ENCODE measurements at regions of chr14 and their contacts with region 1.

Region 1: GRCh38 chr14:29016050-29016900 is 249.7 kb downstream of the FOXG1 start:
- ATAC-seq: peak in 3 of 8 experiments; percentile 45 to 73 (median 58)
- H3K4me3 ChIP-seq: no peak overlapping the region
- H3K27ac ChIP-seq: no peak overlapping the region
- H3K4me1 ChIP-seq: no peaks in the 10 kb centered on the region

Region 2: DNA sequence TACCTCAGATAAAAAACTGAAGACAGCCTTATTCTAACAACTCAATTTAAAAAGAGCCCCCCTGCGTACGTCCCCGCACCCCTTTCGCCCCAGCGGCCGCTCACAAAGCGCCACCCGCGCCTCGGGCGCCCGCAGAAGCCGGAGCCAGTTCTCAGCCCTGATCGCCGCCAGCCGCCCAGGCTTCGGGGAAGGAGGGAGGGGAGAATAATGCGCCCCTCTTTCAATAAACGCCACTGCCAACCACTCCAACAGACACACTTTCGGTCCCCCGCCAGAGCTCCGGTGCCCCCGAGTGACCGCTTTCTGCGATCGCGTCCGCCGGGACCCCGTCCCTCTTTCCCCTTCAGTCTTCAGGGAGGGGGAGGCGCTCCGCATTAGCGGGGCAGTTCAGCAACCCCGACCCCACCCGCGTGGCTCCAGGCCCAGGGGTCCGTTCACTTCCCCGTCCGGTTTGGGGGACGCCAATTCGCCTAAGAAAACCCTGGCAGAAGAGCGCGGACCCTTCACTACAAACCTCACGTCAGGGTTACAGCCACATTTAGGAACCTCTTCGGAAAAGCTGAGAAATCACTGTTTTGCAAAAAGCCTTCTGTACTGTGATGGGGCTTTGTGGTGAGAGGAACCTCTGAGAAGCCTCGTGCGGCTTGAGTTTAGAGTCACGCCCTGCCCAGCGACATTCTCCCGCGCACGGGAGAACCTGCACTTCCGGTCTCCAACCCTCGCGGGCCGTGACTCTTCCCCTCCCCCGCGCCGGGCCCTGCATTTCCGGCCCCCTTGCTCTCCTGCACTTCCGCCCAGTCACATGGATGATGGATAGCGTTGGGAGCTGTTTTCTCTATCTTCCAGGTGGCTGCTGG is 231.0 kb before region 1 on chr14:
- in situ Hi-C with region 1: no loop called
- ATAC-seq: peak in 7 of 8 experiments; percentile 43 to 98 (median 81)
- H3K4me3 ChIP-seq: peak overlapping the region; percentile 15 to 40 (median 35)
- H3K27ac ChIP-seq: no peak overlapping the region
- H3K4me1 ChIP-seq: peaks cover 5% of the 10 kb centered on the region in 2 donors

Region 3: GRCh38 chr14:29222671-29223268 is 206.5 kb after region 1 on chr14:
- in situ Hi-C with region 1: loop called in 1 of 9 experiments (anchors 25 kb)
- ATAC-seq: peak in 2 of 8 experiments; percentile 53 to 62
- H3K4me3 ChIP-seq: no peak overlapping the region
- H3K27ac ChIP-seq: no peak overlapping the region
- H3K4me1 ChIP-seq: peaks cover 3 to 10% of the 10 kb centered on the region in 2 donors

Region 4: DNA sequence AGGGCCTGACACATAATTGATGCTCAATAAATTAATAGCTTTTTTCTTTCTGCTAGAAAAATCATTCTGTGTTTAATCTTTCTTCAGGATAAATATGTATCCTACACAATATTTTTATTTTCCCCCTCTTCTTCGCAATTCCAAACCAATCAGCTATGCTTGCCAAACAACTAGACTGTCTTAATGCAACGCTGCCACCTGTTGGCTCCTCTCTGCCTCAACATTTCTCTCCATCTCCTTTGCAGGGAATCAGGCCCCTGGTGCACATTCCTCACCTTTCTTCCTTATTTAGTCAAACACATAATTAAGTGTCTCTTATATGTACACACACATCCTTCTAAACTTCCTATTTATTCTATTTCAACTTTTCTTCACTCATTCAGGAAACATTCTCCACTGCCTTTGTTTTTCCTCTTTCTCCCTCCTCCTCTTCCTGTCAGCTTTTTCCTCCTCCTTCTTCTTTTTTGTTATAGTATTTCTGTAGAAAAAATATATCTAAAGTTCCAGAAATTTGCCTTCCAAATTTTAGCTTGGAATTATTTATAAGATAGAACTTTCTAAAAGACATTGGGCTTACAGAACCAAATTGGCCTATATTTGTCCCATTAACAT is 505.4 kb after region 1 on chr14:
- in situ Hi-C with region 1: loop called in 1 of 9 experiments (anchors 10 kb)
- ATAC-seq: no peak
- H3K4me3 ChIP-seq: no peak overlapping the region
- H3K27ac ChIP-seq: no peak overlapping the region
- H3K4me1 ChIP-seq: no peaks in the 10 kb centered on the region

Measured in motor neuron (in vitro differentiated cells).